Activated CD4-positive, alpha-beta T cell treated with anti-CD3 and anti-CD28 coated beads, Interleukin-2, amount 10 ng/mL, durations not matched to agents 24 days and 14 days (primary cell): ENCODE measurements at regions of chr11 and their contacts with region 1.

Region 1: DNA sequence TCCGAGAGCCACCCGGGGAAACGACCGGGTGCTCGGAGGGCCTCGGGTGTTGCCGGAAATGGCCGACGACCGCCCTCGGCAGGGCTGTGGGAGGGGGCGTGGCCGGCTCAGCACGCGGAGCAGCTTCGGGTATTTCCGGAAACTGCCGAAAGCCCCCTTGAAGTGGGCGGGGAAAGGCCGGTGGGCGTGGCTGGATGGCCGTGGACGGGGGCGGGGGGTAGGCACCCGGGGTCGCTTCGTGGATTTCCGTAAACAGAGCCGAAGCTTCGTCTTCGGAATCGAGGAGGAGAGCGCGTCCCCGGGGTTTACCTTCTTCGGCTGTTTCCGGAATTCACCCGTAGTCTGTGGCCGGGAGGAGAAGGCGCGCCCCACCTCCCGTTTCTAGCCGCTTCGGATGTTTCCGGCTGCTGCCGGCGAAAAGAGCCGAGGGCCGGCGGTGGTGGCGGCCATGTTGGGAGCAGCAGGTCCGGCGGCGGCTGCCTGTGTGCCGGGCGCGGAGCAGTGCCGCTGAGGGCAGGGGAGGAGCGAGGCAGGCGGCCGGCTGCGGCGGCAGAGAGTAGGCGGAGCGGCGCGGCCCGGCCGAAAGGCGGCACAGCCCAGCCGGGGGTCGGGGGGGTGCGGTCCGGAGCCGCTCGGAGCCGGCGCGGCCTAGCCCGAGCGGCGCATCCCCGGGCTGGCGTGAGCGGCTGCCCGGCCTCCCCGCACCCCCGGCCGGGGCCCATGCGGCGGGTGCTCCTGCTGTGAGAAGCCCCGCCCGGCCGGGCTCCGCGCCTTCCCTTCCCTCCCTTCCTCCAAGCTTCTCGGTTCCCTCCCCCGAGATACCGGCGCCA is at the start of gene MARK2:
- DNase-seq: peak; percentile 100
- H3K4me3 Mint-ChIP-seq: peak within 1 kb of the TSS; percentile 92
- H3K27ac Mint-ChIP-seq: peak within 1 kb of the TSS; percentile 94
- H3K4me1 Mint-ChIP-seq: peaks cover 49% of the 10 kb centered on the region
- H3K27me3 Mint-ChIP-seq: no peaks in the 10 kb centered on the region
- total RNA-seq, gene MARK2: 34.2 and 41.0 TPM in 2 replicates

Region 2: GRCh38 chr11:63813035-63813562 is 25.8 kb before region 1 on chr11 and contains the start of gene SPINDOC:
- intact Hi-C with region 1: loop called (anchors 2 kb)
- DNase-seq: peak; percentile 95
- H3K4me3 Mint-ChIP-seq: peak within 1 kb of the TSS; percentile 86
- H3K27ac Mint-ChIP-seq: peak within 1 kb of the TSS; percentile 78
- H3K4me1 Mint-ChIP-seq: peaks cover 30% of the 10 kb centered on the region
- H3K27me3 Mint-ChIP-seq: peaks cover 3% of the 10 kb centered on the region
- total RNA-seq, gene SPINDOC: 60.2 and 65.8 TPM in 2 replicates

Region 3: GRCh38 chr11:63871962-63872799 is 33.3 kb after region 1 on chr11:
- intact Hi-C with region 1: loop called (anchors 1 kb)
- DNase-seq: peak; percentile 85
- H3K4me3 Mint-ChIP-seq: peak overlapping the region; percentile 10
- H3K27ac Mint-ChIP-seq: peak overlapping the region; percentile 27
- H3K4me1 Mint-ChIP-seq: peaks cover 51% of the 10 kb centered on the region
- H3K27me3 Mint-ChIP-seq: no peaks in the 10 kb centered on the region

Region 4: GRCh38 chr11:63906585-63906984 is 67.7 kb after region 1 on chr11:
- intact Hi-C with region 1: loop called (anchors 1 kb)
- DNase-seq: peak; percentile 82
- H3K4me3 Mint-ChIP-seq: no peak overlapping the region
- H3K27ac Mint-ChIP-seq: no peak overlapping the region
- H3K4me1 Mint-ChIP-seq: peaks cover 4% of the 10 kb centered on the region
- H3K27me3 Mint-ChIP-seq: no peaks in the 10 kb centered on the region

Region 5: DNA sequence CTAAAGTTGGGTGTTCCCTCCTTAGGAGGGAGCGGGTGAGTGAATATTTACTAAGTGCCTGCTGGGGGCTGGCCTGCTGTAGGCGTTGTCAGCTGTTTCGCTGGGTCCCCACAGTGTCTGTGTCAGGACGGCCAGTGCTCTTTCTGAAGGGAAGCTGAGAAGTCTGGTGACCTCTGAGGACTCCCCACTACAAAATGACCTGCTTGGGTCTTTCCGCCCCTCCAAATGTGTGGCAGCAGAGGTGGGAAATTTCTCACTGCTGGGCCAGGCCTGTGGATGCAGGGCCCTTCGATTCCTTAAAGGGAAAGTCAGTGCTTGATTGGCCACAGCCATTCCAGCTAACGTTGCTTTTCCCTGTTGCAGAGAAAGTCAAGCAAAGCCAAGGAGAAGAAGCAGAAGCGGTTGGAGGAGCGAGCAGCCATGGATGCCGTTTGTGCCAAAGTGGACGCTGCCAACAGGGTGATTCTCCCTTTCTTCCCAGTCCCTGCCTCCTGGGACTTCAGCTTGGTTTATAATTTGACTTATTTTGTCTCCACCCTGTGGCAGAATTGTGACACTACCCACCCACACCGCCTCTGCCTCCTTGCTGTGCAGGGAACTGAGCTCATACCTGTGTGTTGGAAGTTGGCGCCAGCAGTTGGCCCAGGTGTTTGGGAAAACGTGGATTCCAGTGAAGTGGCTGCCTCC is 106.7 kb after region 1 on chr11:
- intact Hi-C with region 1: loop called (anchors 1 kb)
- DNase-seq: peak; percentile 84
- H3K4me3 Mint-ChIP-seq: no peak overlapping the region
- H3K27ac Mint-ChIP-seq: no peak overlapping the region
- H3K4me1 Mint-ChIP-seq: peaks cover 4% of the 10 kb centered on the region
- H3K27me3 Mint-ChIP-seq: no peaks in the 10 kb centered on the region

Region 6: DNA sequence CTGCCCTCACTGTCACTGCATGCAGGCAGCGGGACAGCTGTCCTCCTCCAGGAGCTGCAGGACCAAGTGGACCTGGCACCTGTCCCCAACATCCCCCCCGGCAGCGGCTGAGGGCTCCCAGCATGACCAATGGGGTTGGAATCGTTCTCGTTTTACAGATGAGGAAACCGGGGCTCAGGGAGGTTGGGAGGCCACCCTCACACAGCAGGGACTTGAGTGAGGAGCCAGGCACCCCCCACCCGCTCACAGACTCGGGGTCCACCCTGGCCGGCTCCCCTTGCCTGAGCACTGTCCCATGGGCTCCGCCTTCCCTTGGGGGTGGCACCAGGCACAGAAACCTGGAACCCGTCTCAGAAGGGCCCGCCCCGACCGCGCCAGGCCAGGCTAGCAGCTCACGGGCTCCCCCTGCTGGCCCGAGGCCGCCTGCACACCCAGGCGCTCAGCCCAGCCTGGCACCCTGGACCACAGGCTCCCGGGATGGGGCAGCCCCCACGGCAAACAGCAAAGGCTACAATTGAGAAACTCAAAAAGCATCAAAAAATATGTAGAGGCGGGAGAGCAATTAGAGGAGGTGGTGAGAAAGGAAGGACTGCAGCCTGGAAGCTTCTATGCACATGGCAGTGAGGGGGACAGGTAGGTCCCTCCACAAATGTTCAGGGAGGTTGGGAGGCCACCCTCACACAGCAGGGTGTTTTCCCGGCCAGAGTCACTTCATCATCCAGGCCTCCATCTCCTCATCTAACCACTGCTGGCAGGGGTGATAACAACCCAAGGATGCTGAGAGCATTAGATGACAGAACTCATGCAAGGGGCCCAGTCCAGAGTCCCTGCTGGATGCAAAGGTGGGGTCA is 314.2 kb after region 1 on chr11:
- intact Hi-C with region 1: loop called (anchors 1 kb)
- DNase-seq: peak; percentile 93
- H3K4me3 Mint-ChIP-seq: no peak overlapping the region
- H3K27ac Mint-ChIP-seq: no peak overlapping the region
- H3K4me1 Mint-ChIP-seq: peaks cover 7% of the 10 kb centered on the region
- H3K27me3 Mint-ChIP-seq: peaks cover 5% of the 10 kb centered on the region